ENCODE measurements at regions of chr11 and their contacts with region 1.

Region 1: DNA sequence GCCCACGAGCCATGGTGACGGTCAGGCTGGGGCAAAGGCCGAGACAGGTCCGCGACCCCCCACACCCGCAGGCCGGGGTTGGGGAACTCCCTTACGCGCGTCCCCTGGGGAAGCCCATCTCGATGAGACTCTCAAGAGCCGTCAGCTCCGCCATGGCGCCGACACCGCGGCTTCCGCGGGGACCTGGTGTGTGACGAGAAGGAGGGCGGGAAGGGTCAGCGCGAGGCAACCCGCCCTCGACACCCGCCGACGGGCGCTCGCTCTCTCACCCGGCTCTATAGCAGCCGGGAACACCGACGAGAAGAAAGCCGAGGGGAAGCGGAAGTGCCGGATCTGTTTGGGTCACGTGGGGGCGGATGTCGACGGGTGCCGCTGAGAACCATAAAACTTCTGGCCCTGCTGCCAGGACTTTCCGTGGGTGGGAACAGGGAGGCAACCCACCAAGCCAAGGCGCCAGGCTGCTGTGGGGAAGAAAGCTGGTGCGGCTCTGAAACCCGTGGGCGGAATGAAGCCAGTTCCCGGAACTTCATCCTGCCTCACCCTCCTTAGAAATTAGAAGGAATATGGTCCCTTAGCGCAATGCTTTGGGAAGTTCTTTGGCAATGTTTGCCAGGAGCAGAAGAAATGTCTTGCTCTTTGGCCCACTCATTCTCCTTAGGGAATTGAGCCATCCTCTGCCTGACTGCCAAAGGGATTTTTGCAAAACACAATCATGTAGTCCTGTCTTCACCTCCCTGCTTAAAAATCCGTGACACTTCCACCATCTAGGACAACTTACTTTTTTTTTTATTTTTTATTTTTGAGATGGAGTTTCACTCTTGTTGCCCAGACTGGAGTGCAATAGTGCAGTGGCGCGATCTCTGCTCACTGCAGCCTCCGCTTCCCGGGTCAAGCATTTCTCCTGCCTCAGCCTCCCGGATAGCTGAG is at the start of gene UBXN1:
- DNase-seq: peak; percentile 77
- ATAC-seq: peak; percentile 75
- H3K4me3 Mint-ChIP-seq: peak within 1 kb of the TSS; percentile 87
- H3K27ac Mint-ChIP-seq: peak within 1 kb of the TSS; percentile 90
- H3K4me1 Mint-ChIP-seq: peaks cover 20% of the 10 kb centered on the region
- H3K27me3 Mint-ChIP-seq: no peaks in the 10 kb centered on the region
- CTCF ChIP-seq: no peak
- total RNA-seq, gene UBXN1: 128 to 135 TPM (median 128 TPM) in 3 replicates

Region 2: GRCh38 chr11:62689421-62690183 is 10.6 kb after region 1 on chr11 and contains the start of gene LRRN4CL:
- CTCF ChIA-PET with region 1: interaction called, 21 read pairs
- POLR2A ChIA-PET with region 1: no interaction called
- DNase-seq: no peak
- ATAC-seq: no peak
- H3K4me3 Mint-ChIP-seq: no peak within 1 kb of the TSS
- H3K27ac Mint-ChIP-seq: peak within 1 kb of the TSS; percentile 89
- H3K4me1 Mint-ChIP-seq: peaks cover 9% of the 10 kb centered on the region; the same call in 1 of the 2 replicates
- H3K27me3 Mint-ChIP-seq: no peaks in the 10 kb centered on the region
- CTCF ChIP-seq: no peak
- total RNA-seq, gene LRRN4CL: 0.16 to 0.39 TPM (median 0.23 TPM) in 3 replicates

Region 3: DNA sequence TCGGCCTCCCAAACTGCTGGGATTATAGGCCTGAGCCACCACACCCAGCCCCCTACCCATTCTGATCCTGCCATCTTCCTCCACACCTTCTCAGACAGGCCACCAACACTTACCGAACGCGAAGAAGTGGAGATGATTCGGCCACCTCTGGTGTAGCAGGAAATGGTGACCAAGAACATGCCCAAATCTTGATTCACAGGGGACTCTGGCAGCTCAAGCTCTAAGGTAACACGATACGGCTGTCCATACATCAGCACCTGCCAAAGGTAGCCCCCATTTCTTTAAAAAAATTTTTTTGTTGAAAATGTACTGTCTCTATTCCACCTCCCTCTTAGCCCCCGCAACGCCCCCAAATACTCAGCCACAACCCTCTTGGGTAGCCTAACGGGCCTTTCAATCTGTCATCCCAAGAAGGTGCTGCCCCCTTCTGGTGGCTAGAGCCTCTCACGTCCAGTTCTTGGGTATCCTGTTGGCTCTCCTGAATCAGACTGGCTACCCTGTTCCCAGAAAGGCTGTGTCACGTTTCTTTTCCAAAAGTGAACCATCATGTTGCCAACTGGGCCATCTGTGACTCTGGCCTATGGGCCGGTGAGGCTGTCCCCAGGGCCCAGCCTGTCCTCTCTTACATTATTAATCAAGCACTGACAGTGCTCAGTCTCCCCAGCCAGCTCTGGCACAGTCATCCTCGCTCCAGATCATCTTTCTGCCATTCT is 15.6 kb after region 1 on chr11:
- CTCF ChIA-PET with region 1: interaction called, 21 read pairs
- POLR2A ChIA-PET with region 1: no interaction called
- DNase-seq: peak; percentile 86
- ATAC-seq: peak; percentile 84
- H3K4me3 Mint-ChIP-seq: no peak overlapping the region
- H3K27ac Mint-ChIP-seq: peak overlapping the region; percentile 73
- H3K4me1 Mint-ChIP-seq: peaks cover 2% of the 10 kb centered on the region; the same call in 1 of the 2 replicates
- H3K27me3 Mint-ChIP-seq: no peaks in the 10 kb centered on the region
- CTCF ChIP-seq: peak; percentile 84

Measured in WTC11 (cell line).